MCF 10A (cell line): ENCODE measurements at regions of chr3 and their contacts with region 1.

Region 1: DNA sequence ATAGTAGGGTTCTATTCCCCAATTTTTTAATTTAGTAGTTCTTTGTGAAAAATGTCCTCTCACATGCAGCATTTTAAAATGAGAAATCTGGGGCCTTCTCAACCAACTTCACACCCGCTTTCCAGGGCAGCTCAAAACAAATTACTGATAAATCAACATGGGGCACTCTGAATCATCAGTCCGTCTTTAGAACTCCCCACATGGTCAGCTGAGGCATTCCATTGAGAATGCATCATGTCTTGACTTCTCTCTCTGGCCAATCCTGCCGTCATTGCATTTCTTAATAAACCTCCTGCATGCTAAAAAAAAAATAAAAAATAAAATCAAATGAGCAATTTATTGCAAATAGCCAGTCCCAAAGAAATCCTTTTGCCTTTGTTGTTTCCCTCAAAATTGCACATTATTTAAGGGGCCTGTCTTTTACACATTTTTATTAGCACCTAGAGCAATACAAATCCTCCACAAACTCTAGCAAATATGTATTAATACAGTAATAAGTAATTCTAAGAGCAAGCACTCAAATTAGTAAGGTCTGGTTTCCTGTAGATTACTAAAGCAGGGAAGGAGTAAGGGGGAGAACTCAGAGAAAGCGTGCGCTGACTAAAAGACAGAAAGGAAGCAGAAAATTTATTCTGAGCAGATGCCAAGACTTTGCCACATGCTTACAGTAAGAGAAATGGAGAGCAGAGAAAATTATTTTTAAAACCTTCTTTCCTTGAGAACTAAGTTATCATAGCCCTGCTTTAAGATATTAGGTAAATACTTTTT is 175.7 kb downstream of the TNIK start:
- DNase-seq: peak; percentile 93
- H3K4me3 Mint-ChIP-seq: peak overlapping the region; percentile 9
- H3K27ac Mint-ChIP-seq: peak overlapping the region; percentile 83
- H3K4me1 Mint-ChIP-seq: peaks cover 29% of the 10 kb centered on the region
- H3K27me3 Mint-ChIP-seq: no peaks in the 10 kb centered on the region
- CTCF ChIP-seq: no peak

Region 2: GRCh38 chr3:170852324-170852723 is 432.2 kb before region 1 on chr3:
- CTCF ChIA-PET with region 1: no interaction called
- POLR2A ChIA-PET with region 1: no interaction called
- intact Hi-C with region 1: no loop called
- DNase-seq: no peak
- H3K4me3 Mint-ChIP-seq: no peak overlapping the region
- H3K27ac Mint-ChIP-seq: no peak overlapping the region
- H3K4me1 Mint-ChIP-seq: no peaks in the 10 kb centered on the region
- H3K27me3 Mint-ChIP-seq: peaks cover 11% of the 10 kb centered on the region
- CTCF ChIP-seq: no peak

Region 3: DNA sequence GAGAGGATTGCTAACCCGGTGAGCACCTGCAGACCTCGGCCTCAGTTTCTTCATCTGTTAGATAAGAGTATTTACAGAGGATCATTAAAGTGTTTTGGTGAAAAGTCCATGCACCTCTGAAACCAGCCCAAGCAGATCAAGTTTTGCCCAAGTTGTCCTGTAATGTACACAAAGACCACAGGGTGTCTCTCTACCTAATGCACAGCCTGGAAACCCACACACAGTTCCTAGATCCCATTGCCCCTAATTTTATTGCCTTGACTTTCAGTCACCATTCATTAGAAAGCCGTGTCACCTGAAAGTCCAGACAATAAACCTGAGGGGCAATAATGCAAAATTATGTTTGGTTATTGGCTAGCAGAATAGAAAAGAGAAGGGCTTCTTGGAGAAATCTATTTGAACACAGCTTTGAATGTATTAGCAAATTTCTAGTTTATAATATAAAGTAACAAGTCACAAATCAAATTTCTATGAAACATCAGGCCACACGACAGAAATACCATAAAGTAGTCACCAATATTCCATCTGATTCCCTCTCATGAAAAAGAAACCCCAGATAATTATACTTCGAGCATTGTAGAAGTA is 96.7 kb before region 1 on chr3:
- CTCF ChIA-PET with region 1: interaction called, 5 read pairs
- POLR2A ChIA-PET with region 1: interaction called, 4 read pairs
- intact Hi-C with region 1: loop called (anchors 5 kb)
- DNase-seq: peak; percentile 60
- H3K4me3 Mint-ChIP-seq: no peak overlapping the region
- H3K27ac Mint-ChIP-seq: no peak overlapping the region
- H3K4me1 Mint-ChIP-seq: peaks cover 22% of the 10 kb centered on the region
- H3K27me3 Mint-ChIP-seq: no peaks in the 10 kb centered on the region
- CTCF ChIP-seq: peak; percentile 70

Region 4: GRCh38 chr3:171269542-171269941 is 14.9 kb before region 1 on chr3:
- CTCF ChIA-PET with region 1: no interaction called
- POLR2A ChIA-PET with region 1: interaction called, 11 read pairs
- intact Hi-C with region 1: no loop called
- DNase-seq: no peak
- H3K4me3 Mint-ChIP-seq: no peak overlapping the region
- H3K27ac Mint-ChIP-seq: no peak overlapping the region
- H3K4me1 Mint-ChIP-seq: no peaks in the 10 kb centered on the region
- H3K27me3 Mint-ChIP-seq: no peaks in the 10 kb centered on the region
- CTCF ChIP-seq: no peak

Region 5: DNA sequence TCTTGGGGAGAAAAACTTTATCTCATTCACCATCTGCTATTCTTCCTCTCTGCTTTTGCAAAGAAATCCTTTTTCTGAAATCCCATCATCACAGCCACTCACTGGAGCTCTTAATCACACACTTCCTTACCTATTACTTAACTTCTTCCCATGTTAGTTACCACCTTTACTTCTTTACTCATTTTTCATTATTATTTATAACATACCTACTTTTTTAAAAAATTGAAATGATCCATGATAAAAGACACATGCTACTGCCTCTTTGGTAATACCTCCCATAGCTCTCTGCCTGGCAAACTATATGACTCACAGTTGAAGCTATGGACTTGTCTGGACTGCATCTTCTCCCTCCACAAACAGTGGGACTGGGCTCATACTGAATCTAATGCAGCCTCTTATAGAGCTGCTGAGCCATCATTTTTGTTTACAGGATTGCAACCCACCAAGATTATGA is 25.4 kb after region 1 on chr3:
- CTCF ChIA-PET with region 1: interaction called, 4 read pairs
- POLR2A ChIA-PET with region 1: interaction called, 14 read pairs
- intact Hi-C with region 1: no loop called
- DNase-seq: peak; percentile 70
- H3K4me3 Mint-ChIP-seq: no peak overlapping the region
- H3K27ac Mint-ChIP-seq: peak overlapping the region; percentile 88
- H3K4me1 Mint-ChIP-seq: peaks cover 25% of the 10 kb centered on the region
- H3K27me3 Mint-ChIP-seq: no peaks in the 10 kb centered on the region
- CTCF ChIP-seq: no peak

Region 6: GRCh38 chr3:171354706-171355582 is 70.5 kb after region 1 on chr3:
- CTCF ChIA-PET with region 1: no interaction called
- POLR2A ChIA-PET with region 1: interaction called, 22 read pairs
- intact Hi-C with region 1: no loop called
- DNase-seq: peak; percentile 47
- H3K4me3 Mint-ChIP-seq: no peak overlapping the region
- H3K27ac Mint-ChIP-seq: peak overlapping the region; percentile 74
- H3K4me1 Mint-ChIP-seq: peaks cover 64% of the 10 kb centered on the region
- H3K27me3 Mint-ChIP-seq: no peaks in the 10 kb centered on the region
- CTCF ChIP-seq: no peak

Region 7: GRCh38 chr3:172039436-172040077 is 755.1 kb after region 1 on chr3 and contains the start of gene FNDC3B:
- CTCF ChIA-PET with region 1: no interaction called
- POLR2A ChIA-PET with region 1: no interaction called
- intact Hi-C with region 1: no loop called
- DNase-seq: peak; percentile 94
- H3K4me3 Mint-ChIP-seq: peak within 1 kb of the TSS; percentile 95
- H3K27ac Mint-ChIP-seq: peak within 1 kb of the TSS; percentile 84
- H3K4me1 Mint-ChIP-seq: peaks cover 24% of the 10 kb centered on the region
- H3K27me3 Mint-ChIP-seq: no peaks in the 10 kb centered on the region
- CTCF ChIP-seq: no peak
- total RNA-seq, gene FNDC3B: 149 TPM in 2 replicates